Endothelial cell of umbilical vein (primary cell): ENCODE measurements at regions of chr6 and their contacts with region 1.

Region 1: GRCh38 chr6:28136585-28137504 is 4.8 kb upstream of the ZKSCAN8 start:
- DNase-seq: peak; percentile 90
- H3K4me3 ChIP-seq: peak overlapping the region; percentile 54 to 95 (median 90)
- H3K27ac ChIP-seq: peak overlapping the region; percentile 93
- H3K4me1 ChIP-seq: peaks cover 25% of the 10 kb centered on the region
- H3K27me3 ChIP-seq: no peaks in the 10 kb centered on the region
- CTCF ChIP-seq: no peak
- POLR2A ChIP-seq: peak; percentile 65

Region 2: DNA sequence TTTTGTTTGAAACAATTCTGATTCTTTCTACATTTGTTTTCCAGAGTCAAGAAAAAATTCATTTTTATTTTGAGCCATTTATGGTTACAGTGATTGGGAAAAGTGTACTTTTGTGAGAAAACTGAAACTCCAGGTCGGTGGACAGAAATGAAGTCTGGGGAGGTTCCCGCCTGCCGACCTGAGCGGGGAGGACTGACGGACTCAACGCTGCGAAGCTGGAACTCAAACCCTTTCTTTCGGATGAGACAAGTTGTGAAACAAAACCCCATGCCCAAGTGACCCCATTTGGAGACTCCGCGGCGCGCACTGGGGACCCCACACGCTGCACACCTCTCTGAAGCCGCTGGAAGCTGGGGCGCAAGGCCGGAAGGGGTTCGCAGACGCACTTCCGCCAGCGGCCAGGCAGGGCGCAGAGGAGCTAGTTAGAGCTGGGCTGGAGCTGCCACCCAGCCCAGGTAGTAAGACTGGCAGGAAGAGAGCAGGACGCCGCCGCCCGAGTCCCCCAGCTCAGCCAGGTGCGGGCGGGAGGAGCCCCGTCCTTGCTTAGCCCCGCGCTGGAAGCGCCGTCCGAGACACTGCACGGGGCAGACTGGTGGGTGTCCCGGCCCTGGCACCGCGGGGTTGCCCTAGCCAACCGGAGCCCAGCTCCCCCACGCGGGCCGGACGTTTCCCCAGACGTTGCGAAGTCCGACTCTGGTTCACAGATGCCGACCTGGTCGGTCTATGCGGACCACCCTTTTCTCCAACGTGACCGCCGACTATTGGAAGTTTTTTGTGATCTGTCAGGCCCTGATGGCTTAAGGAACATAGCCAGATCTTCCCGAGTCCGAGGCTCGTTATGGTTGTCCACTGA is 32.2 kb before region 1 on chr6:
- CTCF ChIA-PET with region 1: interaction called, 9 read pairs
- POLR2A ChIA-PET with region 1: interaction called, 3 read pairs
- dilution Hi-C with region 1: no loop called
- intact Hi-C with region 1: loop called (anchors 1 kb)
- DNase-seq: peak; percentile 72
- H3K4me3 ChIP-seq: peak overlapping the region; percentile 47 to 72 (median 70)
- H3K27ac ChIP-seq: no peak overlapping the region
- H3K4me1 ChIP-seq: peaks cover 6% of the 10 kb centered on the region
- H3K27me3 ChIP-seq: no peaks in the 10 kb centered on the region
- CTCF ChIP-seq: peak; percentile 29 to 55
- POLR2A ChIP-seq: peak; percentile 75

Region 3: GRCh38 chr6:28212510-28213212 is 75.8 kb after region 1 on chr6:
- CTCF ChIA-PET with region 1: interaction called, 4 read pairs
- POLR2A ChIA-PET with region 1: interaction called, 4 read pairs
- dilution Hi-C with region 1: no loop called
- intact Hi-C with region 1: loop called (anchors 1 kb)
- DNase-seq: peak; percentile 90
- H3K4me3 ChIP-seq: peak overlapping the region; percentile 31 to 69 (median 62)
- H3K27ac ChIP-seq: no peak overlapping the region
- H3K4me1 ChIP-seq: peaks cover 14% of the 10 kb centered on the region
- H3K27me3 ChIP-seq: peaks cover 31 to 67% of the 10 kb centered on the region in 2 experiments
- CTCF ChIP-seq: no peak
- POLR2A ChIP-seq: no peak

Region 4: DNA sequence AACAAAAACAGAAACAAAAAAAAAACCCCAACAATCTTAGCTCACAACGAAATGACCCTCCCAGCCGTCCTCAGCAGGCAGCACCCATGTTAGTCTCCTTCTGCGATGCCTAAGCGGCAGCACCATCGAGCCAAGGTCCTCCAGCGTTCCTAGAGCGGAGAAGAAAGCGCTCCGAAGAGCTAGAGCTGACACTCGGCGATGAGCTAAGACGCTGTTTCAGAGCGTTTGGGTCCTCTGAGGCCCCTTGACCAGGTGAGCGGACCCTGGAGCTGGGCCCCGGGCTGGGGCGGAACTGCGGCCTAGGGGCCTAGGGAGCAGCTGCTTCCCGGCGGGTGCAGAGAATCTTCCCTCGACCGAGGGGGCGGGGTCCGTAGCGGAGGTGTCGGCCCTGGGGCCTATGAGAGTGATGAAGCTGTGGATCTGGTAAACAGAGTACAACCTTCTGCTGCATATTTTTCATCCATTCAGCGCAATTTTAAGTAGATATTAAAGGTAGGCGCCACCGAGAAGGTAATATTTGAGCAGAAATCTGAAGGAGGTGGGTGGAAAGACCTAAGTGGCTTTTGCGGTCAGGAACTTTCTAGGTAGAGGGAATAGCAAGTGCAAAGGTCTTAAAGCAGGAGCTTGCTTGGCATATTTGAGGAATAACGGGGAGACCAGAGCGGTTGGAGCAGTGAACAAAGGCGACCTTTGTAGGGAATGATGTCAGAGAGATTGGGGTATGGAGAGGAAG is 130.3 kb after region 1 on chr6 and contains the start of gene ZSCAN26:
- CTCF ChIA-PET with region 1: interaction called, 3 read pairs
- POLR2A ChIA-PET with region 1: interaction called, 6 read pairs
- dilution Hi-C with region 1: no loop called
- intact Hi-C with region 1: loop called (anchors 1 kb)
- DNase-seq: peak; percentile 92
- H3K4me3 ChIP-seq: peak within 1 kb of the TSS; percentile 73 to 96 (median 85)
- H3K27ac ChIP-seq: peak within 1 kb of the TSS; percentile 71
- H3K4me1 ChIP-seq: peaks cover 35% of the 10 kb centered on the region
- H3K27me3 ChIP-seq: peaks cover 0 to 3% of the 10 kb centered on the region in 2 experiments
- CTCF ChIP-seq: no peak
- POLR2A ChIP-seq: peak; percentile 81
- total RNA-seq, gene ZSCAN26: 12.7 and 14.1 TPM in 2 replicates

Region 5: GRCh38 chr6:28355743-28356665 is 219.2 kb after region 1 on chr6:
- CTCF ChIA-PET with region 1: interaction called, 33 read pairs
- POLR2A ChIA-PET with region 1: interaction called, 7 read pairs
- dilution Hi-C with region 1: no loop called
- intact Hi-C with region 1: loop called (anchors 1 kb)
- DNase-seq: peak; percentile 93
- H3K4me3 ChIP-seq: peak overlapping the region; percentile 52 to 84 (median 55)
- H3K27ac ChIP-seq: peak overlapping the region; percentile 60
- H3K4me1 ChIP-seq: peaks cover 36% of the 10 kb centered on the region
- H3K27me3 ChIP-seq: no peaks in the 10 kb centered on the region
- CTCF ChIP-seq: peak; percentile 66 to 73
- POLR2A ChIP-seq: peak; percentile 40

Region 6: GRCh38 chr6:28542440-28543296 is 405.8 kb after region 1 on chr6:
- CTCF ChIA-PET with region 1: no interaction called
- POLR2A ChIA-PET with region 1: no interaction called
- dilution Hi-C with region 1: no loop called
- intact Hi-C with region 1: loop called (anchors 2 kb)
- DNase-seq: peak; percentile 70
- H3K4me3 ChIP-seq: no peak overlapping the region
- H3K27ac ChIP-seq: no peak overlapping the region
- H3K4me1 ChIP-seq: peaks cover 13% of the 10 kb centered on the region
- H3K27me3 ChIP-seq: peaks cover 0 to under 1% of the 10 kb centered on the region in 2 experiments
- CTCF ChIP-seq: peak in 1 of 2 donors; percentile 33
- POLR2A ChIP-seq: no peak